Lower lobe of right lung (tissue), 2 donors: ENCODE measurements at regions of chr12 and their contacts with region 1.

Region 1: DNA sequence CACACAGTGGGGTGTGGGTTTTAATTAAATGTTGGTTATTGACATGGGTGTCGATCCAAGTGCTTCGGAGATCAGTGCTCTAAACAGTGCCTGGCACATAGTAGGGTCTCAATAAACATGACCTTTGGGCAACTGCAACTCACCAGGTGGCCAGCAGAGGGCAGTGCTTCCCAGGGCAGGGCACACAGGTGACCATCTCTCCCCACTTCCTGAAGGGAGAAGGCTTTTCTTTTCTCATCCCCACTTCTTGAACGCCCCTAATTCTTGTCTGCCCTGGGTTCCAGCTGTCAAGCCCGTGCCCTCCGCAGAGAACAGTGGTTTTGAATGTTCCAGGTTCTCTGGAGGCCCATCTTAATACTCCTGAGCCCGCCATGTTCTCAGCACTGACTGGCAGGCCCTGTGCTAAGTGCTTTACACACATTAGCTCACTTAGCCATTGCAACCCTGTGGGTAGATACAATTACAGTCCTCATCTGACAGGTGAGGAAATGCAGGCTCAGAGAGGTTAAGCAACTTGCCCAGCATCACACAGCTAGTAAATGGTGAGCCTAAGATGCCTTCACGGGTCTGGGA is 16.3 kb downstream of the RAPGEF3 start:
- DNase-seq: peak; percentile 74
- ATAC-seq: peak; percentile 13 to 42
- H3K4me3 ChIP-seq: no peak overlapping the region
- H3K27ac ChIP-seq: no peak overlapping the region
- H3K4me1 ChIP-seq: peaks cover 38% of the 10 kb centered on the region
- H3K27me3 ChIP-seq: no peaks in the 10 kb centered on the region
- CTCF ChIP-seq: peak; percentile 97

Region 2: DNA sequence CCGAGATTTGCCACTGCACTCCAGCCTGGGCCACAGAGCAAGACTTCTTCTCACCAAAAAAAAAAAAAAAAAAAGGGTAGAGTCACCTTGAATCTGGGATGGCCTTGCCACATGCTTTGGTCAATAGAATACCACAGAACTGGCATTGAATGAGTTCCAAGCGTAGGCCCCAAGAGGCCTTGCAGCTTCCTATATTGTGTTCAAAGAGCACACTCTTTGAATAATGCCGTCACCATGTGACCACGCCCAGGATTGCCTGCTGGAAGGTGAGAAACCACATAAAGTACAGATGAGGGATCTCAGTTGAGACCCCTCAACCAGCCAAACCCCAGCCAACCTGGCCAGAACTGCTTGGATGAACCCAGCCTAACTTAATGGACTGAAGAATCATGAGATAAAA is 423.4 kb before region 1 on chr12:
- intact Hi-C with region 1: no loop called
- DNase-seq: no peak
- ATAC-seq: no peak
- H3K4me3 ChIP-seq: no peak overlapping the region
- H3K27ac ChIP-seq: no peak overlapping the region
- H3K4me1 ChIP-seq: peaks cover 16% of the 10 kb centered on the region
- H3K27me3 ChIP-seq: no peaks in the 10 kb centered on the region
- CTCF ChIP-seq: no peak

Region 3: DNA sequence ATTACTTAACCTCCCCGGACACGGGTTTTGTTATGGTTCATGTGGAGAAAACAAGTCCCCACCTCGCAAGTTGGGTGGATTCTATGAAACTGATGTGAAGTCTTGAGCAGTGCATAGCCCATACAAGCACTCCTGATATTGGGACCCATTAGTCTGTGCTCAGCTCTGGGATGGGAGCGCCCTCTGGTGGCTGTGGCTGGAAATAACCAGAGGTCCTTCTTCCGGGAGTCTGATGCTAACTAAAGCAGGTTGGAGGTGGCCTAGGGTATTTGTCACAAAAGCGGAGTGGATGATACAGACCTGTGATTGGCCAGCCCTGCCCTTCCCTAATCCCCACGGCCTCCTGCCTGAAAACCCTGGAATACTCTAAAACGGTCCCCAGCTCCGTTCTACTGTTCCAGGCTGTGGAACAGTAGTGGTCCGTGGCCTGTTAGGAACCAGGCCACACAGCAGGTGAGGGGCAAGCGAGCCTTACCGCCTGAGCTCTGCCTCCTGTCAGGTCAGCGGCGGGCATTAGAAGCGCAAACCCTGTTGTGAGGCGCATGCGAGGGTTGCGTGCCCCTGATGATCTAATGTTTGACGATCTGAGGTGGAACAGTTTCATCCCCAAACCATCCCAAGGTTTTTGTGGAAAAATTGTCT is 37.1 kb after region 1 on chr12:
- intact Hi-C with region 1: loop called (anchors 5 kb)
- DNase-seq: peak; percentile 86
- ATAC-seq: peak; percentile 86
- H3K4me3 ChIP-seq: no peak overlapping the region
- H3K27ac ChIP-seq: no peak overlapping the region
- H3K4me1 ChIP-seq: peaks cover 52% of the 10 kb centered on the region
- H3K27me3 ChIP-seq: no peaks in the 10 kb centered on the region
- CTCF ChIP-seq: peak; percentile 95